Caco-2 (cell line): ENCODE measurements at regions of chr9 and their contacts with region 1.

Region 1: DNA sequence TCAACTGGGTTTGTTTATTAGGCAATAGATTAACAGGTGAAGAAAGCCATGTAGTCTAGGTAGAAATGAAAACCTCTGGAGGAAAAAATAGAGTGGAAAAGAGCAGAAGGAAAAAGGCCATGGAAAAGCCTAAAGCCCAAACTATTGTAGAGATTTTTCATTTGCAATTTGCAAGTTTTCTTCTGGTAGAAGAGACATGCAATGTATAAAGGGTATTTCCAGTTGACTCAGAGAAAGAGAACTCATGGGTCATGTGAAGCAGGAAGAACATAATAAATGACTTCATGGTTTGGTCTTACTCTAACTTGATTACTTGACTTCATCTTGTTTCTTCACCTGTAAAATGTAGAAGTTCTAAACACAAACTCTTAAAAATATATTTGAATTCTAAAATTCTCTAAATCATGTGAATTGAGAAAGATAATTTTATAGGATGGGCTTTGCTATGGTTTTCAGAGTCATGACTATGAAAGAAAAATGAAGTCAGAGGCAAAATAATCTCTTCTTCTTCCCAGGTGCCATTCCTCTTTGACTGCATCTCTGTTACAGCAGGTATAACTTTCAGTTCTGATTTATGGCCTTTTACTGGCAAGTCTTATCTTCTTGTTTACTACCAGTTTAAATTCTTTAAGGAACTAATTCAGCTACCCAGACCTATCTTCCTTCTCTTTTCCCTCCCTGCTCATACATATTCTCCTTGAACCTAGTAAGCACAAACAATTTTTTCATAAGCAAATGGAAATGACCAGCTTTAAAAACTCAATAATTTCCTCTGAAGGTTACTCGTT is 47.7 kb upstream of the TMC1 start:
- DNase-seq: no peak
- H3K4me3 ChIP-seq: no peak overlapping the region
- H3K4me3 Mint-ChIP-seq: no peak overlapping the region
- H3K27ac Mint-ChIP-seq: no peak overlapping the region
- H3K4me1 ChIP-seq: peaks cover 7% of the 10 kb centered on the region; the same call in 1 of the 2 replicates
- H3K4me1 Mint-ChIP-seq: no peaks in the 10 kb centered on the region
- H3K27me3 ChIP-seq: no peaks in the 10 kb centered on the region
- H3K27me3 Mint-ChIP-seq: no peaks in the 10 kb centered on the region
- CTCF ChIP-seq: no peak

Region 2: DNA sequence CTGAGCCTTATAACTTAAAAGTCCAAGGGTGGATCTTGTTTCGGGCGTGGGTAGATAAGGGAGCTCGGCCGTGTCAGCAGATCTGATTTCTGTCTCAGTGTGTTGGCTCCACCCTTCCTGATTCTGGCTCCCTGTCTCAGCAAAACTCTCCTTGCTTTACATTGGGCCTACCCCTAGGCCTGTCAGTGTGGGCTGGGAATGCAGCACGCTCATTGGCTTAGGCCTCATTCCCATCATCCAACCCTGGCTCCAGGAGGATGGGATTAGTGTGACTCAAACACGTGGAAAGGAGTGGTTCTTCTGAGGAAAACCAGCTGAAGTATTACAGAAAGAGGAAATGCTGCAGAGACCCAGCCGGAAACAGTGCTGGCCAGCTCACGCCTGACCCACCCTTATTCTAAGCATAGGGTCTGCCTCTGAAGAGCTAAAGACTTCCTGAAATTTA is 168.5 kb before region 1 on chr9:
- CTCF ChIA-PET with region 1: no interaction called
- POLR2A ChIA-PET with region 1: no interaction called
- intact Hi-C with region 1: loop called (anchors 5 kb)
- DNase-seq: peak; percentile 71 to 88
- H3K4me3 ChIP-seq: peak overlapping the region; percentile 30
- H3K4me3 Mint-ChIP-seq: peak overlapping the region; percentile 76
- H3K27ac Mint-ChIP-seq: peak overlapping the region; percentile 91
- H3K4me1 ChIP-seq: no peaks in the 10 kb centered on the region
- H3K4me1 Mint-ChIP-seq: peaks cover 6% of the 10 kb centered on the region
- H3K27me3 ChIP-seq: no peaks in the 10 kb centered on the region
- H3K27me3 Mint-ChIP-seq: no peaks in the 10 kb centered on the region
- CTCF ChIP-seq: no peak

Region 3: DNA sequence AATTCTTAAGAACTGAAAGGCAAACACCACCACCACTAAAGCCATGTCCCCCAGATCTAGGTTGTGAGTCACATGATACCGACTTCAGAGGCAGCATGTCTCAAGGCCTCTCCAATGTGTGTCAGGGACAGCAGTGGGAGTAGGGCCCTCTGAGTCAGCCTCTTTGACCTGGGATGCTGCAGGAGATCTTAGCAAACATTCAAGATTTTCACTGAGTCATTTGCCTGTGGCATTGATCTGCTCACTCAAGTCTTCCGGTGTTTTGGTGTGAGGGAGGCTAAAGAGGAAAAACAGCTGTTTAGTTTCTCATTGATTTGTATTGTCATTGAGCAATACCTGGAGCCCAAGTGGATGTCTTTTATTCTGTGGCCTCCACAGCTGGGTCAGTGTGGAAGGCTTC is 83.9 kb after region 1 on chr9:
- CTCF ChIA-PET with region 1: no interaction called
- POLR2A ChIA-PET with region 1: interaction called, 3 read pairs
- intact Hi-C with region 1: loop called (anchors 10 kb)
- DNase-seq: peak; percentile 17 to 61
- H3K4me3 ChIP-seq: no peak overlapping the region
- H3K4me3 Mint-ChIP-seq: no peak overlapping the region
- H3K27ac Mint-ChIP-seq: no peak overlapping the region
- H3K4me1 ChIP-seq: peaks cover 4% of the 10 kb centered on the region; the same call in 1 of the 2 replicates
- H3K4me1 Mint-ChIP-seq: no peaks in the 10 kb centered on the region
- H3K27me3 ChIP-seq: no peaks in the 10 kb centered on the region
- H3K27me3 Mint-ChIP-seq: no peaks in the 10 kb centered on the region
- CTCF ChIP-seq: no peak